Calu3 (cell line): ENCODE measurements at regions of chr6 and their contacts with region 1.

Region 1: GRCh38 chr6:78436335-78436734 is 431.0 kb upstream of the IRAK1BP1 start:
- DNase-seq: peak; percentile 46
- H3K4me3 Mint-ChIP-seq: no peak overlapping the region
- H3K27ac Mint-ChIP-seq: no peak overlapping the region
- H3K4me1 Mint-ChIP-seq: no peaks in the 10 kb centered on the region
- H3K27me3 Mint-ChIP-seq: no peaks in the 10 kb centered on the region
- CTCF ChIP-seq: peak; percentile 47

Region 2: GRCh38 chr6:78533426-78533825 is 97.1 kb after region 1 on chr6:
- CTCF ChIA-PET with region 1: no interaction called
- intact Hi-C with region 1: no loop called
- DNase-seq: no peak
- H3K4me3 Mint-ChIP-seq: no peak overlapping the region
- H3K27ac Mint-ChIP-seq: no peak overlapping the region
- H3K4me1 Mint-ChIP-seq: peaks cover 21% of the 10 kb centered on the region
- H3K27me3 Mint-ChIP-seq: no peaks in the 10 kb centered on the region
- CTCF ChIP-seq: no peak

Region 3: DNA sequence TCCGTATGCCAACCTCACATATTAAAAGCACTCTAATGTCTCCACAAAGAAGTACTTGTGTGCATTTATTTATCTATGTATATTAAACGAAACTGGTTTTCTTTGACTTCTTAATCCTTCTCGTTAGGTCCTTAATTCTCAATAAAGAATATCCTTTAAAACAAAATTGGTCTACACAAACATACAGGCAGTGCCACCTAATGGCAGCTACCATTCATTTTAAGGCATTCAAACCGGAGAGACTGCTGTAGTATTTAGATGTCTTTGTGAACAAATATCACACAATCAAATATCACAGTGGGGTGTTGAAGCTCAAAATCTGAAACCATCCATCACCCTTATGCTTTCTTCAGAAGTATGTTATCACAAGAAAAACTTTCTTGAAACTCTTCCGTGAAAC is 334.4 kb after region 1 on chr6:
- CTCF ChIA-PET with region 1: no interaction called
- intact Hi-C with region 1: loop called (anchors 1 kb)
- DNase-seq: no peak
- H3K4me3 Mint-ChIP-seq: no peak overlapping the region
- H3K27ac Mint-ChIP-seq: no peak overlapping the region
- H3K4me1 Mint-ChIP-seq: no peaks in the 10 kb centered on the region
- H3K27me3 Mint-ChIP-seq: no peaks in the 10 kb centered on the region
- CTCF ChIP-seq: no peak

Region 4: DNA sequence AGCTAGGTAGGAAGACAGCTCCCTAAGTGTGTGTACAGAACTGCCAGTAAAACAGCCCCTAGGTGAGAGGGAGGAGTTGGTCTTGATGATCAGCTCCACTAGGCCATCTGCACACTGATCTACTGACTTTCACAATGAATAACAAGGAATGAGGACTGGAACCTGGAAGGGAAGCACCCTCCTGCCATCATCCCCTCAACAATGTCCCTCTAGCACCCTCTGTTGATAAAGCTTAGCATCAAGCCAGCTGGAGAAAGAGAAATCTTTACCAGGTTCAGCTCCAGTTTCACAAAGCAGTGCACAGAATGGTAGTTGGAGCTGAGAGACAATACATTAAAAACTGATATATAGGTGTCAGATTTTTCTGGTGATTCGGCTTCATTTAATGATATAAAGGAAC is 373.8 kb after region 1 on chr6:
- CTCF ChIA-PET with region 1: interaction called, 11 read pairs
- intact Hi-C with region 1: loop called (anchors 1 kb)
- DNase-seq: peak; percentile 52
- H3K4me3 Mint-ChIP-seq: no peak overlapping the region
- H3K27ac Mint-ChIP-seq: no peak overlapping the region
- H3K4me1 Mint-ChIP-seq: no peaks in the 10 kb centered on the region
- H3K27me3 Mint-ChIP-seq: no peaks in the 10 kb centered on the region
- CTCF ChIP-seq: peak; percentile 66